OCI-LY7 (cell line): ENCODE measurements at regions of chr14 and their contacts with region 1.

Region 1: DNA sequence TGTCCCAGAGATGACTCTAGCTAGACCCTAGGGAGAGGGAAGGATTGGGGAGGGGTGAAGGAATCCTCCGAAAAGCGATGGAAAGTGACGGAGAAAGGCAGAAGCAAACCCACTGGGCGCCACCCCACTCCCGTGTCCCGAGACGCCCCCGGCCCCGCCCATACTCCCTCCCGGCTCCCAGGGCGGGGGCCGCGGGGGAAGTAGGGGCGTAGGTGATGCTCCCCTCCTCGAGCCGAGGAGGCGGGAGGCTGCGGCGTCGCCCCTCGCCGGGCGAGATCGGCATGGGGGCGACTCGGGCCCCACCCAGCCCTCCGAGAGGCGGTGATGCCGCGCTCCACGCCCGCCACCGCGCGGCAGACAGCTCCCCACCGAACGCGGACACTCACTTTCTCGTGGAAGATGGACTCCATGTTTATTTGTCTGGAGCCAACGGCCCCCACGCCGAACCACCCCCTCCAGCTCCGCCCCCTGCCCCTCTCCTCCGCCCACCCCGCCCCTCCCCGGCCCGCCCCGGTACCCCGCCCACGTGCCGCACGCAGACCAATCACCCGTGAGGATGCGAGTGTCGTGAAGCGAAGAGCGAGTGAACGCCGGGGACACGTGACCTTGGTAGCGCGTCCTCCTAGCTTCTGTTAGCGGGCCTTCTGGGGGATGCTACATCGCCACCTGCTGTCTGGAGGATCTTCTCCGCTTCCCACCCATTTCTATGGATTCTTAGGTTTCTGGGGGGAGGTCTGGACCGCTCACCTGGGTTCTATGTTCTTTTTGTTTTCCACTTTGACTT is at the start of gene ATXN3:
- DNase-seq: peak; percentile 99
- H3K4me3 ChIP-seq: peak within 1 kb of the TSS; percentile 75
- H3K27ac ChIP-seq: peak within 1 kb of the TSS; percentile 61
- H3K4me1 ChIP-seq: peaks cover 36% of the 10 kb centered on the region
- CTCF ChIP-seq: peak; percentile 79
- total RNA-seq, gene ATXN3: 21.3 and 40.1 TPM in 2 replicates

Region 2: GRCh38 chr14:92039719-92040430 is 66.5 kb before region 1 on chr14 and contains the start of gene TRIP11:
- CTCF ChIA-PET with region 1: no interaction called
- POLR2A ChIA-PET with region 1: interaction called, 10 read pairs
- intact Hi-C with region 1: loop called (anchors 2 kb)
- DNase-seq: peak; percentile 94
- H3K4me3 ChIP-seq: peak within 1 kb of the TSS; percentile 81
- H3K27ac ChIP-seq: peak within 1 kb of the TSS; percentile 72
- H3K4me1 ChIP-seq: peaks cover 25% of the 10 kb centered on the region
- CTCF ChIP-seq: no peak
- total RNA-seq, gene TRIP11: 11.8 and 15.1 TPM in 2 replicates

Region 3: DNA sequence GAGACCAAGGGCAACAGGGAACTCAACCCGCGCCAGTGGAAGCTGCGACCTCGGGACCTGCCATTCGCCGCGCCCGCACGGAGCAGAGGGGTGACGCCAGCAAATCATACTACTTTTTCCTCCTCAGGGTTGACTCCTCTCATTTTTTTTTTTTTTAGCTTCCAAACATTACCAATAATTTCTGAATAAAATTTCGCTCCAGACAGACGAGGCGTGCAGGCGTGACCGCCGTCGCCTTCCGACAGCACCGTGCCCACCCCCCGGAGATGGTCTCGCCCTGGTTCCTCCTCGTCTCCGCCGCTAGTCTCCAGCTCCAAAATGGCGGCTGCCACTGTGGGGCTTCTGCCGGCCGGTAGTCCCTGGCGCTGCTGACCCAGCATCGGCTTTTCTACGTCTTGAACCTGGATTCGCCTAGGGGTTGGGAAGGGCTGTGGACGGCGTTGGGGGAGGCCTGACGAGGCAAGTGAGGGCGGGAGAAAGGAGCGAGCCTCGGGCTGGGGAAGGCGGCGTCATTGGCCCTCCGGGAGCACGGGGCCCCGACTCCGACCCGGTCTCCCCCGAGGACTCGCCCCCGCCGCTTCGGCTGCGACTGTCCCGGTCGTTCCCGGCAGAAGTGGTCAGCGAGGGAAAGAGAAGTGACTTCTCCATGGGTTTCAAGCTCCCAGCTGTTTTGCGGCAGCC is 15.5 kb after region 1 on chr14 and contains the starts of genes CPSF2 and NDUFB1:
- CTCF ChIA-PET with region 1: interaction called, 7 read pairs
- POLR2A ChIA-PET with region 1: interaction called, 22 read pairs
- intact Hi-C with region 1: loop called (anchors 1 kb)
- DNase-seq: peak; percentile 89
- H3K4me3 ChIP-seq: peak within 1 kb of the TSS; percentile 89
- H3K27ac ChIP-seq: peak within 1 kb of the TSS; percentile 61
- H3K4me1 ChIP-seq: peaks cover 16% of the 10 kb centered on the region
- CTCF ChIP-seq: no peak
- total RNA-seq, gene CPSF2: 40.0 and 46.8 TPM in 2 replicates
- total RNA-seq, gene NDUFB1: 230 and 320 TPM in 2 replicates

Region 4: DNA sequence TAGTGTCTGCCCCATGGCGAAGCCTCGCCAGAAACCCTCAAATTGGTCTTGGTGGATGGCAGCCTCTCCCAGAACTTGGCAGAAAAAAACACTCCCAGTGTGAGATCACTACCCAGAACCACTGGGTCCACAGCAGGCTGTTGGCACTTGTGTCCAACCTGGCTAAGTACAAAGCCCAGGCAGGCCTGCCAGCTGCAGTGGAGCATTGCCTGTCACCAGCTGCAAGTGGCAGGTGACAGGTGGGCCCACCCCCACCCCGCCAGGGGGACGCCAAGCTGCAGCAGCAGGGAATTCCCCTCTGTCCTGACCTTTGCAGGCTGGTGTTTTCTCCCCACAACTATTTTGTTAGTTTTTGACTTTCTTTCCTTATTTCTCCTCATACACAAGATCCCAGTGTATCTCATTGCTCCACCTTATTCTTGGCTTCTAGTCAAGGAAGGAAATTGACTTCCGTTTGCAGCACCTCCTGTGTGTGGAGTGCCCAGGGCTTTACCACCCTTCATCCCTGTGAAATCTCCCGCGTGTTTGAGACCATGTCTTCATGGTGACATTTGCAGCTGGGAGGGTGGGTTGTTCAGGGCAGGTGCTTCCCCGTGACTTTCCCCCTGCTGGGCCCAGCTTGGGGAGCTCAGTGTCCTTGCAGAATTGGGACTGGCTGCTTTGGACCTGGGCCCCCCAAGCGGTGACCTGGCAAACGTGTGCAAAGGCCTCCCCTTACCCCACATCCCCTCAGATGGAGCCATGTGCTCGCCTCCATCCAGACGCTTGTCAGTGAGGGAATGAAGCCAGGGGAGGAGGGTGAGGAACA is 333.4 kb after region 1 on chr14:
- CTCF ChIA-PET with region 1: no interaction called
- POLR2A ChIA-PET with region 1: no interaction called
- intact Hi-C with region 1: no loop called
- DNase-seq: peak; percentile 31
- H3K4me3 ChIP-seq: no peak overlapping the region
- H3K27ac ChIP-seq: no peak overlapping the region
- H3K4me1 ChIP-seq: peaks cover 8% of the 10 kb centered on the region
- CTCF ChIP-seq: no peak